ENCODE measurements at regions of chr1 and their contacts with region 1.

Region 1: GRCh38 chr1:58816072-58816746 is 32.4 kb upstream of the JUN start:
- DNase-seq: peak; percentile 83 to 88
- ATAC-seq: peak; percentile 80 to 89 (median 81)
- H3K4me3 ChIP-seq: peak overlapping the region; percentile 90
- H3K4me3 Mint-ChIP-seq: peak overlapping the region; percentile 92
- H3K27ac ChIP-seq: peak overlapping the region; percentile 88
- H3K27ac Mint-ChIP-seq: peak overlapping the region; percentile 88
- H3K4me1 ChIP-seq: peaks cover 47% of the 10 kb centered on the region
- H3K4me1 Mint-ChIP-seq: peaks cover 49 to 61% of the 10 kb centered on the region in 2 donors
- H3K27me3 ChIP-seq: no peaks in the 10 kb centered on the region
- H3K27me3 Mint-ChIP-seq: peaks cover 0 to 1% of the 10 kb centered on the region in 2 donors
- CTCF ChIP-seq: no peak

Region 2: GRCh38 chr1:58857680-58858673 is 41.8 kb after region 1 on chr1:
- intact Hi-C with region 1: loop called (anchors 5 kb)
- DNase-seq: peak in 1 of 2 donors; percentile 62
- ATAC-seq: peak; percentile 32 to 68 (median 58)
- H3K4me3 ChIP-seq: no peak overlapping the region
- H3K4me3 Mint-ChIP-seq: no peak overlapping the region
- H3K27ac ChIP-seq: peak overlapping the region; percentile 14
- H3K27ac Mint-ChIP-seq: peak overlapping the region; percentile 42 to 74
- H3K4me1 ChIP-seq: peaks cover 39% of the 10 kb centered on the region
- H3K4me1 Mint-ChIP-seq: peaks cover 54 to 74% of the 10 kb centered on the region in 2 donors
- H3K27me3 ChIP-seq: no peaks in the 10 kb centered on the region
- H3K27me3 Mint-ChIP-seq: no peaks in the 10 kb centered on the region
- CTCF ChIP-seq: no peak

Region 3: DNA sequence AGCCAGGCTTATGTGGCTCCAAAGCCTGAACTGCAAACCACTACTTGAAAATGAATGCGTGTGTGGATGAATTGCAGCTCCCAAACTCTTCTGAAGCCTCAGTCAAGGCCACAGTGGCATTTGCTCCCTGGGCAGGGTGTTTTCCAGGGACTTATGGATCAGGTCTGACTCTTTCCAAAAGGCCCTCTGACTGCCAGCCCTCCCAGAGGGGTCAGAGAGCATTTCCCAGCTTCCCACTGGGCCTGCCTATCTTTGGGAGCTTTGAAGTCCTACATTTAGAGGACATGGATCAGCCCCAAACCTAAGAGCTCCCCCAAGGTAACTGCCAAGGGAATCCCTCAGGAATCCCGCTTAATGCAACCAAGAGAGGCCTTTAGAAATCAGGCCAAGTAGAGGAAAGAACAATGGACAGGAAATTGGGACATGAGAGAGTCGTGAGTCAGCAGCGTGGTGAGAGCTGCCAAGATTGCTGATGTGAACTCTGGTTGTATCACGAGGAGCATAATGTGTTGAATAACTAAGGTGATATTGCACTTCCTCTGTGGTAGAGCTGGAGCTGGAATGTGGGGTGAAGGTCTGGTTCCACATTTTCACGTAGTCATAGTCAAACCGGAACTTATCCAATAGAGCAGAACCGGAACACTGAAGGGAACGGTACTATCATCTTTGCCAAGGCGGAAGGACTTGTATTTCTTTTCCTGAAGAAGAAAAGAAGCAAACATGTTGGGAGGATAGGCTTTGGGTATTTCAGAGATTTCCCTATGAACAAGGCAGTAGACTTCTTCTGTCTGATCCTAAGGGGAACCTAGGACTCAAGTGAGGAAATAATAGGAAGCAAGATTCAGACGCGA is 67.1 kb after region 1 on chr1:
- intact Hi-C with region 1: loop called (anchors 10 kb)
- DNase-seq: peak in 1 of 2 donors; percentile 21
- ATAC-seq: peak in 2 of 3 donors; percentile 21 to 69
- H3K4me3 ChIP-seq: no peak overlapping the region
- H3K4me3 Mint-ChIP-seq: no peak overlapping the region
- H3K27ac ChIP-seq: peak overlapping the region; percentile 20
- H3K27ac Mint-ChIP-seq: peak overlapping the region in 1 of 2 donors; percentile 5
- H3K4me1 ChIP-seq: peaks cover 43% of the 10 kb centered on the region
- H3K4me1 Mint-ChIP-seq: peaks cover 51 to 88% of the 10 kb centered on the region in 2 donors
- H3K27me3 ChIP-seq: no peaks in the 10 kb centered on the region
- H3K27me3 Mint-ChIP-seq: no peaks in the 10 kb centered on the region
- CTCF ChIP-seq: no peak

Region 4: DNA sequence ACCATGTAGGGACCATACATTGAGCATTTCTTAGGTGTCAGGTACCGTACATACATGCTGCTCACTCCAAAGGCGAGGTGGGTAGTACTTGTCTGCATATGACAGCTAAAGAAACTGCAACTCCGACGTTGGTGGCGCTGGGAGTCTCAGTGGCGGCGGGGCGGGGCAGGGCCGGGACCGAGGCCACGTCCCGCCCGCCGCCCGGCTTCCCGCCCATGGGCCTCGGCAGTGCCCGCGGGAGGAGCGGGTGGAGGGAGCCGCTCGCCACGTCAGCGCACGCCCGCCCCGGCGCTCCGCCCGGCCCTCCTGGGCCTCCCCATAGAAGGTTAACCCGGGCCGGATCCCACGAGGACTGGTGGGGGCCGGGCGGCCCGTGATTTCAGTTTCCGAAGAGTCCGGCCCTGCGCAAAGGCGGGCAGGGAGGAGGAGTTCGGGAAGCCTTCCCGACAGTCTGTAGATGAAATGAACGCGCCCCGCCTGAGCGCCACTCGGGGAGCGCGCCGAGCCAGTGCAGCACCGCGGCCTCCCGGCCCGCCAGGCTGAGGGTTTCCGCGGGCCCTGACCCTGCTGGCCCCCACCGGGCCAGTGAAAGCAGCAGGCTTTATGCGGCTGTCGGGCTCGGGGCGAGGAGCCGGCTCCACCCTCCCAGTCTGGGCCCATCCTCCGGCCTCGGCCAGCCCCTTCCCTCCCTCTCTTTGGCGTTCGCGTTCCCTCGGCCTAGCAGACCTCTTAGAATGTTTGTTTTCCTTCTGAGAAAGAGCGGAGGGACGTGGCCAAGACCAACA is 87.5 kb after region 1 on chr1:
- intact Hi-C with region 1: loop called (anchors 2 kb)
- DNase-seq: peak; percentile 58 to 79
- ATAC-seq: peak; percentile 81 to 86 (median 84)
- H3K4me3 ChIP-seq: peak overlapping the region; percentile 44
- H3K4me3 Mint-ChIP-seq: peak overlapping the region; percentile 90
- H3K27ac ChIP-seq: peak overlapping the region; percentile 77
- H3K27ac Mint-ChIP-seq: peak overlapping the region; percentile 79 to 91
- H3K4me1 ChIP-seq: peaks cover 12% of the 10 kb centered on the region
- H3K4me1 Mint-ChIP-seq: peaks cover 9 to 20% of the 10 kb centered on the region in 2 donors
- H3K27me3 ChIP-seq: no peaks in the 10 kb centered on the region
- H3K27me3 Mint-ChIP-seq: no peaks in the 10 kb centered on the region
- CTCF ChIP-seq: no peak

Region 5: DNA sequence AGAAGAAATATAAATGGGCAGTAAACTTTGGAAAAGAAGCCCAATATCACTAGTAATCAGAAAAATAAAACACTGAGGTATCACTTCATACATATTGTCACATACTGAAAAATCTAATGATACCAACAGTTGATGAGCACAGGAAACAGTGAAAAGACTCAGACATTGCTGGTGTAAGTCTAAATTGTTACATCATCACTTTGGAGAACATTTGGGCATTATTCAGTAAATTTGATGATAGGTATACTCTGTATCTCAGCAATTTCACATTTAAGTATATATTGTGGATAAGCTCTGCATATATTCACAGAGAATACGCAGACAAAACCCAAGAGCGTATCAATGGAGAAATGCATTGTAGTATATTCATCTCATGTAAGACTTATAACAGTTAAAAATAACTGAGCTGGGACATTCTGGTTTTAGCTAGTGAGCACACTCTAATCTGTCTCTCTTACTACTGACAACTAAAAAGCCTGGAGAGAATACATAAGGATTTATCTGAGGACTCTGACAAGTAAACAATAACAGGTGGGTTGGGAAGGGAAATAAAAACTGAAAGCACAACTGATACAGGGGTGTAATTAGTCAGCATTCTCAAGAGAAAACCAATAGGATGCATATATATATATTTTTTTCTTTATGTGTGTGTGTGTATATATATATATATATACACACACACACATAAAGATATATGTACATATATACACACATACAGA is 180.3 kb after region 1 on chr1:
- intact Hi-C with region 1: no loop called
- DNase-seq: no peak
- ATAC-seq: no peak
- H3K4me3 ChIP-seq: no peak overlapping the region
- H3K4me3 Mint-ChIP-seq: no peak overlapping the region
- H3K27ac ChIP-seq: no peak overlapping the region
- H3K27ac Mint-ChIP-seq: no peak overlapping the region
- H3K4me1 ChIP-seq: no peaks in the 10 kb centered on the region
- H3K4me1 Mint-ChIP-seq: peaks cover 6 to 18% of the 10 kb centered on the region in 2 donors
- H3K27me3 ChIP-seq: no peaks in the 10 kb centered on the region
- H3K27me3 Mint-ChIP-seq: no peaks in the 10 kb centered on the region
- CTCF ChIP-seq: no peak

Region 6: DNA sequence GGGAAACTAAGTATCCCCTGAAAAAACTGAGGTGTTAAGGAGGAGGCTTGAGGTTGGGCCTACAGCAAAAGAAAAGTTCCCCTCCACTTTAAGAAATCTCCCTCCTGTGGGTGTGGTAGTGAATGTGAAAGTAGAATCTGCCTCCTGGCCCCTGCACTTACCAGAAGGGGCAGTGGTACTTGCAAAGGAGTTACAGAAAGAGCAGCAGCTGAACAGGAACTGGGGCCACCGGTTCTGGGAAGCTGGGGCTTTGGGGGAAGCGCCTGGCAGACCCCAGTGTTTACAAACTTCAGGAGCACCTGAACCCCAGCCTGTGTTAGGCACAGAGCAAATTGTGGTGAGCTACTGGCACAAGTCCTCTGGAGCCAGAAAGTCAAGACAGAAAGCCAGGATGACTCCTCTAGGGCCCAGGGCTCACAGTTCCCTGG is 230.5 kb after region 1 on chr1:
- intact Hi-C with region 1: loop called (anchors 10 kb)
- DNase-seq: peak in 1 of 2 donors; percentile 73
- ATAC-seq: peak; percentile 81 to 89 (median 85)
- H3K4me3 ChIP-seq: no peak overlapping the region
- H3K4me3 Mint-ChIP-seq: peak overlapping the region; percentile 51
- H3K27ac ChIP-seq: peak overlapping the region; percentile 71
- H3K27ac Mint-ChIP-seq: peak overlapping the region; percentile 80 to 84
- H3K4me1 ChIP-seq: peaks cover 42% of the 10 kb centered on the region
- H3K4me1 Mint-ChIP-seq: peaks cover 37 to 40% of the 10 kb centered on the region in 2 donors
- H3K27me3 ChIP-seq: no peaks in the 10 kb centered on the region
- H3K27me3 Mint-ChIP-seq: peaks cover 0 to 4% of the 10 kb centered on the region in 2 donors
- CTCF ChIP-seq: peak; percentile 25

Region 7: DNA sequence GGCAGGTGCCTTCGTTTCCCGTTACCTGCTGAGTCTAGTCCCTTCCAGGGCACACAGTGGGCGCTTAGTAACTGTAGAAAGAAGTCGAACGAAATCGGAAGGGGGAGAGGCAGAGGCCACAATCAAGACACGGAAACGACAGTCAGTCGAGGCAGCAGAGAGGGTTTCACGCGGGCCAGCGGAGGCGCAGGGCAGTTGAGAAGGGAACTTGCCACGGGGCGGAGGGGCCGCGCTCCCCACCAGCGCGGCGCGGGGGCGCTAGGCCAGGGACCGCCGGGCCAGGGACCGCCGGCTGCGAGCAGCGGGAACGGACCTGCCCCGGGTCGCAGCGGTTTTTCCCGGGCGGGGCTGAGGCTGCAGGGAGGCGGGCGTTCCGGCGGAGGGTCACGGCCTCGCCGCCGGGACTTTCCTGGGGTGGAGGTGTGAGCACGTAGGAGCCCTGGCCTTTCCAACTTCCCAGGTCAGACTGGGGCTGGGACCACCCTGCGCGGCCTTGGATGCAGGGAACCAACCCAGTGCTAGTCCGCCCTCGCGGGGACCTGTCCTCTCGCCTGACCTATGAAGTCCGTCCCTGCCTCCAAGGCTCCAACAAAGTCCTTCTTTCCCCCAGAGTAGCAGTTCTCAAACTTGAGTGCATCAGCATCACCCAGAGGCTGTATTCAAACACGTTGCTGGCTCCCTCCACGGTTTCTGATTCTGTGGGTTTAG is 330.6 kb after region 1 on chr1:
- intact Hi-C with region 1: loop called (anchors 5 kb)
- DNase-seq: peak; percentile 68 to 72
- ATAC-seq: peak; percentile 85 to 90 (median 86)
- H3K4me3 ChIP-seq: peak overlapping the region; percentile 54
- H3K4me3 Mint-ChIP-seq: peak overlapping the region; percentile 87
- H3K27ac ChIP-seq: peak overlapping the region; percentile 59
- H3K27ac Mint-ChIP-seq: peak overlapping the region; percentile 82 to 85
- H3K4me1 ChIP-seq: peaks cover 14% of the 10 kb centered on the region
- H3K4me1 Mint-ChIP-seq: peaks cover 21 to 28% of the 10 kb centered on the region in 2 donors
- H3K27me3 ChIP-seq: no peaks in the 10 kb centered on the region
- H3K27me3 Mint-ChIP-seq: no peaks in the 10 kb centered on the region
- CTCF ChIP-seq: peak; percentile 7

Region 8: GRCh38 chr1:59296358-59297256 is 480.4 kb after region 1 on chr1 and contains the start of gene FGGY:
- intact Hi-C with region 1: loop called (anchors 10 kb)
- DNase-seq: peak; percentile 87 to 93
- ATAC-seq: peak; percentile 85 to 95 (median 89)
- H3K4me3 ChIP-seq: peak within 1 kb of the TSS; percentile 69
- H3K4me3 Mint-ChIP-seq: peak within 1 kb of the TSS; percentile 88
- H3K27ac ChIP-seq: peak within 1 kb of the TSS; percentile 96
- H3K27ac Mint-ChIP-seq: peak within 1 kb of the TSS; percentile 94 to 95
- H3K4me1 ChIP-seq: peaks cover 43% of the 10 kb centered on the region
- H3K4me1 Mint-ChIP-seq: peaks cover 48 to 50% of the 10 kb centered on the region in 2 donors
- H3K27me3 ChIP-seq: no peaks in the 10 kb centered on the region
- H3K27me3 Mint-ChIP-seq: no peaks in the 10 kb centered on the region
- CTCF ChIP-seq: no peak
- total RNA-seq, gene FGGY: 21.8 to 31.5 (median 21.8) TPM

Measured in natural killer cell (primary cell).